Activated CD4-positive, alpha-beta memory T cell treated with anti-CD3 and anti-CD28 coated beads for 36 hours (primary cell): ENCODE measurements at regions of chr1 and their contacts with region 1.

Region 1: GRCh38 chr1:47725992-47726855 is 271.0 kb downstream of the TRABD2B start:
- DNase-seq: peak; percentile 79
- H3K4me3 Mint-ChIP-seq: peak overlapping the region; percentile 27
- H3K27ac Mint-ChIP-seq: no peak overlapping the region
- H3K4me1 Mint-ChIP-seq: peaks cover 14% of the 10 kb centered on the region
- H3K27me3 Mint-ChIP-seq: peaks cover 37% of the 10 kb centered on the region

Region 2: DNA sequence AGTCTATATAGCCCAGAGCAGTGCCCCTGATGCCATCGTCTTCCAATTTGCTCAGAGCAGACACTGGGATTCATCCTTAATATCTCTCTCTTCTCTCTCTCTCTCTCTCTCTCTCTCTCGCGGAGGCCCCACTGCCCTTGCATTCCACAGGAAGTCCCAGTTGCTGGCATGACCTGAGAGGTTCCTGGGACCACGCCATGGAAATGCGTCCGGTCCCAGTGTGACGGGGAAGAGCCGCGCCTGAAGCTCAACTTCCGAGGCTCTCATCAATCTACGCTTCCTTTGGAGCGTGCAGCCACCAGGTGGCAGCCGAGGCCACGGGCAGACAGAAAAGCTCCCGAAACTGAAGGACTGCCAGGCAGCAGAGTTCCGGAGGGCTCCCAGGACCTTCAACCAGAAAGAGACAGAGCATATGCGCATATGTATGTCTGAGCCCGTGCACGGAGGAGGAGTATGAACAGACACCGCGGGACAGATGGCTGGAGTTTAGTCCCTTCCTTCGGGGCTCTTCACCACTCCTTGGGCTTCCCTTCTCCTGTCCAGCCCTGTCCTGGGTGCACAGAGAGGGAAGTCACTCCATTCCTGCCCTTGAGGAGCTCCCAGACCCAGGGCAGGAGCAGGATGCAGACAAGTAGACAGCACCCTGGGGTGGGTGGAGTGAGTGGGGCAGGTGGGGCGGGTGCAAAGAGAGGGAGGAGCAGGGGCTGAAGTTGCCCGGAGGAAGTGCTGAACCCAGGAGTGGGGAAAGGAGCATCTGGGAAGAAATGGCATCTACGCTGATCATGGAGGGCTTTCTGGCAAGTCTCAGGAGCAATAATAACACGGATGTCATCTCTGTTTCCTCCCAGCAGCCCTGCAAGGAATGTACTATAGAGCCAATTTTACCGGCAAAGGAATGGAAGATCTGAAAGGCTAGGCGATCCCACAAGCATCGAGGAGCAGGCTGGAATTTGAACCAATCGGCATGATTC is 546.9 kb before region 1 on chr1:
- CTCF ChIA-PET with region 1: interaction called, 10 read pairs
- POLR2A ChIA-PET with region 1: no interaction called
- intact Hi-C with region 1: loop called (anchors 5 kb)
- DNase-seq: peak; percentile 91
- H3K4me3 Mint-ChIP-seq: peak overlapping the region; percentile 74
- H3K27ac Mint-ChIP-seq: no peak overlapping the region
- H3K4me1 Mint-ChIP-seq: peaks cover 8% of the 10 kb centered on the region
- H3K27me3 Mint-ChIP-seq: peaks cover 29% of the 10 kb centered on the region

Region 3: DNA sequence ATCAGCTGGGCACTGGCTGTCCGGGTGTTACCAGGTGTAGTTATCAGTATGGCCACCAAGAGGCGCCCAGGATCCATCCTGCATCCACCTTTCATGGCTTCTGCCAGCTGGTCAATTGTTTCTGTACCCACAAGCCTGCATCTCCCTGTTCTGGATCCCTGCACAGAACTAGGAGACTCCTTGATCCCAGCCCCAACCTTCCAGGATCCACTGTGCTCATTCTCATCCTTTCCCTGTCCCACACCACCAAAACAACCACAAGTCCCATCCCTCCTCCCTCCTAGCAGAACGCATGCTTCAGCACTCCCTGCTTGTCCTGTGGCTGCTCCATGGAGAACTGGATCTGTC is 337.4 kb before region 1 on chr1:
- CTCF ChIA-PET with region 1: interaction called, 49 read pairs
- POLR2A ChIA-PET with region 1: no interaction called
- intact Hi-C with region 1: loop called (anchors 2 kb)
- DNase-seq: peak; percentile 71
- H3K4me3 Mint-ChIP-seq: no peak overlapping the region
- H3K27ac Mint-ChIP-seq: no peak overlapping the region
- H3K4me1 Mint-ChIP-seq: no peaks in the 10 kb centered on the region
- H3K27me3 Mint-ChIP-seq: no peaks in the 10 kb centered on the region

Region 4: DNA sequence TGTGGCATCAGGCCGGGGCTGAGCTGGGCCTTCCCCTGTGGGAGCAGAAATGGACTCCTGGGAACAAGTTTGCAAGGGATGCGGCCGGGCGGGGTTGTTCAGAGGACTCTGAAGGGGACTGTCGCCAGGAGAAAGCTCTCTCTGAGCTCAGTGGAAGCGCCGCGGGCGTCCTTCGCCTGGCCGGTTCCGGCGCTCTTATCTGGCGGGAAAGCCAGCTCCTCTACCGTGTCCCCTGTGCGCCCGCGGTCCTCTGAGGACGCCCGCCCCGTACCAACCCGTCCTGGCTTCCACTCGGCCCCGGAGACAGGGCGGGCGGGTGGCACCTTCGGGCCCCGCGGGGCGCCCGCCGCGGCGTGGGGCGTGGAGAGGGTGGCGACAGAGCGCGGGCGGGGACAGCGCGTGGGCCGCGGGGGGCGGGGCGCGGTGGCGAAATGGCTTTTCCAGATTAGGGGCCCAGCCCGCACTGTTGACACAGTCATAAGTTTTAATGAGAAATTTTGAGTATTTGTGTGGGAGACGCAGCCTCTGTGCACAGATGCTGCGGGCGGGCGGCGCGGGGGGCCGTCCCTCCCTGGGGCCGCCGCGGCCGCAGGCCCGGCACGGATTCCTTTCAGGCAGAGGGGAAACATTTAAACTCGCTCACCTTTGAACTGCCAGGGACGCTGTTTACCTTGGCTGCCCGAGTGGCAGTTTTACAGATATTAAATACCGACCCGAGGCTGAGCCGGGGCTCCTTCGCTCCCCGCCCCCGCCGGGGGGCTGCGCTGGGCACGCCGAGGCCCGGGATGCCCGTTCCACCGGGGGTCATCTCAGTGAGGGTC is 218.1 kb before region 1 on chr1:
- CTCF ChIA-PET with region 1: no interaction called
- POLR2A ChIA-PET with region 1: no interaction called
- intact Hi-C with region 1: loop called (anchors 10 kb)
- DNase-seq: peak; percentile 55
- H3K4me3 Mint-ChIP-seq: no peak overlapping the region
- H3K27ac Mint-ChIP-seq: no peak overlapping the region
- H3K4me1 Mint-ChIP-seq: peaks cover 4% of the 10 kb centered on the region
- H3K27me3 Mint-ChIP-seq: peaks cover 68% of the 10 kb centered on the region

Region 5: GRCh38 chr1:47738560-47739182 is 12.4 kb after region 1 on chr1:
- CTCF ChIA-PET with region 1: interaction called, 15 read pairs
- POLR2A ChIA-PET with region 1: no interaction called
- intact Hi-C with region 1: no loop called
- DNase-seq: no peak
- H3K4me3 Mint-ChIP-seq: no peak overlapping the region
- H3K27ac Mint-ChIP-seq: no peak overlapping the region
- H3K4me1 Mint-ChIP-seq: no peaks in the 10 kb centered on the region
- H3K27me3 Mint-ChIP-seq: peaks cover 42% of the 10 kb centered on the region

Region 6: DNA sequence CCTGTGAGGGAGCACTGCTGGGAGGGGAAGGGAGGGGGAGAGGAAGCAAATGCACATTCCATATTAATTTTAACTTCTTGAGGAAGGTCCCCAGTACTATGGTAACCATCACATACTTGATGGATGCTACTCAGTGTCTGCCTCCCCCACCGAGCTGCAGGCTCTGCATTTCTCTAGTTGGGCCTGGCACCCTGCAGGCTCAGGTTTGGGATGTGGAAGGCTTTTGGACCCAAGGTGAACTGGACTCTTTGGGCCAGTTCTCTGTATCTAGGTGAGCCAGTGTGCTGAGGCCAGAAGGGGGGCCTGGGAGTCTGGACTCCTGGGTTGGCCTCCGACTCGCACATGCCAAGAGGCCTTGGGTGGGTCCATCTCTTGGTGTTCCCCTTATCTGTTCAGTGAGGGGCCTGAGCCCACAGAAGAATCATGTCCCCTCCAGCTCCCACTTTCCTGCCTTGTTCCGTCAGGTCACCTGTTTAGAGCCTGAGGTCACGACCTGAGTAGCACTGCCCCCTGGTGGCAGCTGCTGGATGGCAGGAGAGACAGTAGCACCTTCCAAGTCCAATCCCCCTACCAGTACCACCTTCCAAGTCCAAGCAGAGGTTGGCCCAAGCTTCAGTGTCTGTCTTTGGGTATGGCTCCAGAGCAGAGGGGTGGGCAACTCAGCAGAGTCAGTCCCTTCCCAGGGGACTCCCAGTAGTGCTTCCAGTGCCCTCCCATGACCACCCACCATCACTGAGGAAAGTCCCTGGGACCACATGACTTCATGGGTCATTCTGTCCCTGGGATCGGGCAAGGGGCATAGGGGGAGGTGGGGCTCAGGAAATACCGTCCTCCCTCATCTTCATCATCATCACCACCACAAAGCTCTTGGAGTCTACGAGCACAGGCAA is 29.1 kb after region 1 on chr1:
- CTCF ChIA-PET with region 1: interaction called, 12 read pairs
- POLR2A ChIA-PET with region 1: no interaction called
- intact Hi-C with region 1: no loop called
- DNase-seq: peak; percentile 70
- H3K4me3 Mint-ChIP-seq: no peak overlapping the region
- H3K27ac Mint-ChIP-seq: no peak overlapping the region
- H3K4me1 Mint-ChIP-seq: no peaks in the 10 kb centered on the region
- H3K27me3 Mint-ChIP-seq: peaks cover 9% of the 10 kb centered on the region